HAP-1 (cell line): ENCODE measurements at regions of chr1 and their contacts with region 1.

Region 1: DNA sequence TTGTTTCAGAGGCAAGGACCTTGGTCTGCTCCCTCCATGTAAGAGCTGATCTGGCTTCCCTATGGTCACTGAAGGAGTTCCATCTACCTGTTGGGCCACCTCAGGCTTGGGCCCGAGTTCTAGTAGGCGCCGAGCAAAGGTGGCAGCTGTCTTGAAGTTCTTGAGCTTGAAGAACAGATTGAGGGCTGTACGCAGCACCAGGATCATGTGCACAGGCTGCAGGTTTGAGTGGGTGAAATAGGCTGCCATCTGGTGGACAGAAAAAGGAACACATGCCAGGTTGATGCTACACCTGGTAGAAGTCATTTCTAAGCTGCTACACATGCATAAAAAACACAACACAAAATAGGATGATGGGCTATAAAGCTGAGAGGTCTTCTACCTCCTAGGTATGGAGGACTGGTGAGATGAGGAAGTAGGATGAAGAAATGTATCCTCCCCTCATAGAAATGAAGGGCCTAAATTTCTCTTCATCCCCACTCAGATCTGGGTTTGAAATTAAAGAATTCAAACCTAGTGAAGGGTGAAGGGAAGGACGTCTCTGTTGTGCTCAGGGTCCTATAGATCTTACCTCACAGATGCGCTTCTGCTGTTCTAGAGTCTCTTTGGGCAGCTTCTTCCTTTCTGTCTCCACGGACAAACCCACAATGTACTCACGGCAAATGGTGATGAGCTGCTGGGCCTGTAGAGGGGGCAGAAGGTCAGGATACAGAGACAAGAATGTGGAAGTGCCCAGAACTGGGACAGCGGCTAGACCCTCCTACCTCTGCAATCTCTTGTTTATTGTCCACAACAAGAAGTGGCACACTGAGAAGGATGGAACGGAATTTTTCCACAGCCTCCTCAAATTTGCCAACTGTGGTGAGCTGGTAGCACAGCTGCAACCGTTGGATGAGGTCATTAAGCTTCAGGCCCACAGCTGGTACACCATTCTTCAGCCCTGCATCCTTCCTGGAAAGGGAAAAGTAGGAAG is 6.6 kb upstream of the PEX19 start:
- DNase-seq: peak; percentile 62 to 71
- H3K4me3 ChIP-seq: no peak overlapping the region
- H3K4me1 ChIP-seq: no peaks in the 10 kb centered on the region
- H3K27me3 ChIP-seq: no peaks in the 10 kb centered on the region

Region 2: GRCh38 chr1:159849626-159850366 is 441.7 kb before region 1 on chr1:
- in situ Hi-C with region 1: no loop called
- DNase-seq: no peak
- H3K4me3 ChIP-seq: no peak overlapping the region
- H3K4me1 ChIP-seq: peaks cover 3% of the 10 kb centered on the region; the same call in 1 of the 2 replicates
- H3K27me3 ChIP-seq: no peaks in the 10 kb centered on the region; the same call in 1 of the 2 replicates

Region 3: GRCh38 chr1:160193091-160193819 is 98.3 kb before region 1 on chr1:
- in situ Hi-C with region 1: loop called (anchors 5 kb)
- DNase-seq: peak; percentile 72 to 93
- H3K4me3 ChIP-seq: no peak overlapping the region
- H3K4me1 ChIP-seq: peaks cover 4% of the 10 kb centered on the region; the same call in 1 of the 2 replicates
- H3K27me3 ChIP-seq: peaks cover 2% of the 10 kb centered on the region; the same call in 1 of the 2 replicates